Activated T-helper 2 cell treated with anti-CD3 and anti-CD28 coated beads, Interferon-gamma antibody, Interleukin-2, Interleukin-4, amounts not matched to agents 10 μg/mL and 5 μg/mL and 100 μg/mL, durations not matched to agents 14 hours and 24 hours and 36 hours (primary cell): ENCODE measurements at regions of chr19 and their contacts with region 1.

Region 1: DNA sequence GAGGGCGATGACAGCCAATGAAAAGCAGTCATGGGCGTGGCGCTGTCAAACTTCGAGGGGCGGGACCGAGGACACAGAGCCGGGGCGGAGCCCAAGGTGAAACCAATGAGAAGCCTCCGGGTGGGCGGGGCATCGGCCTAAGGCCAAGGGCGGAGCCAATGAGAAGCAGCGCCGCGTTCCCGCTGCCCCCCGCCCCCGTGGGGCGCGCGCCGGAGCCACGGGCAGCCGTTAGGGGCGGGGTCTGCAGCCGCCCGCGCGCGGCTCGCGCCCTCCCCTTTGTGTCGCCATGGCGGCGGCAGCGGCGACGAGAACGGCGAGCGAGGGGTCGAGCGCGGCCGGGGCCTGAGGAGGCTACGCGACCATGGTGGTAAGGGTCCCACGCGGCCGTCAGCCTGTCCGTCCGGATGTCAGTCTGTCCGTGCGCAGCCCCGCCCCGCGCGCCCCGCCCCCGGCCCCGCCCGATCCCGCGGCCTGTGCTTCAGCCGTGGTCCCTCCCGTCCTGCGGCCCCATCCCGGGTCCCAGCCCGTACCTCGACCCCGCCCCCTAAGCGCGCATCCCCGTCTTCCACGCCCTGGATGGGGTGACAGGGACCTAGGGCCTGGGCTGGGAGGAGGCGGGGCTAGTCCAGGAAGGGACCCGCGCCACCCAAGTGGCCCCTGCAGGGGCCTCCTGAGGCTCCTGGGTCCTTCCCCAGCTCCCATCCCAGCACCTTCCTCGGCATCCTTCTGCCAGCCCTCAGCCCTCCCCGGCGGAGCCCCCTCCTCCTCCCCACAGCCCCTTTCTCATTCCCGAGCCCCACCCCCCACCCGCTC is at the start of gene ARHGAP33:
- DNase-seq: peak; percentile 99
- H3K4me3 Mint-ChIP-seq: peak within 1 kb of the TSS; percentile 86
- H3K27ac Mint-ChIP-seq: peak within 1 kb of the TSS; percentile 73
- H3K4me1 Mint-ChIP-seq: peaks cover 21% of the 10 kb centered on the region
- H3K27me3 Mint-ChIP-seq: no peaks in the 10 kb centered on the region
- total RNA-seq, gene ARHGAP33: 29.1 and 33.0 TPM in 2 replicates

Region 2: GRCh38 chr19:35666246-35666913 is 109.1 kb before region 1 on chr19 and contains the start of gene UPK1A:
- intact Hi-C with region 1: no loop called
- DNase-seq: no peak
- H3K4me3 Mint-ChIP-seq: no peak within 1 kb of the TSS
- H3K27ac Mint-ChIP-seq: no peak within 1 kb of the TSS
- H3K4me1 Mint-ChIP-seq: peaks cover 2% of the 10 kb centered on the region
- H3K27me3 Mint-ChIP-seq: peaks cover 14% of the 10 kb centered on the region
- total RNA-seq, gene UPK1A: 0.59 and 1.2 TPM in 2 replicates

Region 3: GRCh38 chr19:35748106-35749020 is 27.1 kb before region 1 on chr19 and contains the start of gene LIN37:
- intact Hi-C with region 1: loop called (anchors 2 kb)
- DNase-seq: peak; percentile 98
- H3K4me3 Mint-ChIP-seq: peak within 1 kb of the TSS; percentile 95
- H3K27ac Mint-ChIP-seq: peak within 1 kb of the TSS; percentile 90
- H3K4me1 Mint-ChIP-seq: peaks cover 31% of the 10 kb centered on the region
- H3K27me3 Mint-ChIP-seq: no peaks in the 10 kb centered on the region
- total RNA-seq, gene LIN37: 9.9 and 10.0 TPM in 2 replicates

Region 4: DNA sequence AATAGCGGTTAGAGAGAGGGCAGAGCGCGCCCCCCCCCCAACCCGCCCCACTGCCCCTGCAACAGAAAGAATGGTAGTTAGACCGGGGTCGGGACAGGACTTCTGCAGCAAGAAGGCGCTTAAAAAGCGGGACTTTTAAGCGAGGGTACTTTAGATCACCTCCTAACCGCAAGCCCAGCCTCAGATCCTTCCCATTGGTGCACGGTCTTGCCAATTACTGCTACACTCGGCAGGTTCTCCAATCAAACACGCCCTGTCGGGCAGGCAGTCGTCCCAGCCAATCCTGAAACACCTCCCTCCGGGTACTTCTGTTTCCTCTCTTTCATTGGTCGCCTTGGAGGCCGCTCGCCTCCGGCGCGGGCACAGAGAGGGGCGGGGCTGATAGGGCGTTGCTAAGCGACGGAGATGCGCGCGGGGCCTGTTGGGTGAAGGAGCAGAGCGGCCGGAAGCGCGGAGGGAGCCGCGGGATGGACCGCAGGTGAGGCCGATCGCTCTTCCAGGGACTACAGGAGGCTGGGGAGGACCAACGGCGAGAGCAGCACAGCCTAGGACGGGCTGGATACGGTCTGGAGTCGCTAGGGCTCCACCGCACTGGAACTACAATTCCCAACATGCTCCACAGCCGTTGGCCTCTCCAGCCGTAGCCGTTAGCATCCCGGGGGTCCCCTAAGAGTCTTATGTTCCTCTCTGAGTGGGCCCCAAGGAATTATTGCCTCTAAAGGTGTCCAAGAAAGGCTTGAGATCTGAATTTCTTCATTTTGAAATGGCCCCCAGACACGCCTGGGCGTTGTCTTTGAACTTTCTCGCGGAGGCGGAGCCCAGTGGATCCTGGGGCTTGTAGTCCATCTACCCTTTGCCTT is 17.5 kb before region 1 on chr19 and contains the start of gene PROSER3:
- intact Hi-C with region 1: loop called (anchors 2 kb)
- DNase-seq: peak; percentile 100
- H3K4me3 Mint-ChIP-seq: peak within 1 kb of the TSS; percentile 83
- H3K27ac Mint-ChIP-seq: peak within 1 kb of the TSS; percentile 85
- H3K4me1 Mint-ChIP-seq: peaks cover 21% of the 10 kb centered on the region
- H3K27me3 Mint-ChIP-seq: no peaks in the 10 kb centered on the region
- total RNA-seq, gene PROSER3: 40.1 and 41.2 TPM in 2 replicates